GM12878 (cell line): ENCODE measurements at regions of chr4 and their contacts with region 1.

Region 1: DNA sequence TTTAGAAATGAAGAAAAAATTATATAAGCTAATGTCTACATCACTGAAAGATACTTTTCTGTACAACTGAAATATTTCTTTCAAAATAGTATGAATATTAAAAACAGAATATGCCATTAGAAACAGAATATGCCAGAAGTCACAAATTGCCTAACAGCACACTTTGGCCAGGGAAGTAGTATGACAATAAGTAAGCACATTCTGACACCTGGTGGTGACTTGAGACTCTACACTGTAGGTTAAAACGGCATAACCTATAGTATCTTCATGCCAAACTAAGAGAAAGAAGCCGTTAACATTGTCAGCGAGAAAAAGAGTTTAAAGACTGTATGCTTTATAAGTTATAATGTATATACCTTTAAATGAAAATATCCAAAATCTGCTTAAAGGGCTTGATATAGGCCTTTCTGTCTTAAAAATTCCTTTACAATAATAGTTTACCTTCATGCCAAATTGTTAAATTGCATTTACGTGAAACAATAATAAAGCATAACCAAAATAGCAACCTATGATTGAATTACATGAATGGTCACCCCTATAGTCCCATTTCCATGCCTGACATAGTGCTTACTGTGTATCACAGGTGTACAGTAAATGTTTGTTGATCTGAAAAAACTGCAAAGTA is 32.8 kb downstream of the FAM13A start:
- DNase-seq: peak; percentile 47
- ATAC-seq: peak; percentile 99
- H3K4me3 ChIP-seq: no peak overlapping the region
- H3K27ac ChIP-seq: no peak overlapping the region
- H3K4me1 ChIP-seq: no peaks in the 10 kb centered on the region
- H3K27me3 ChIP-seq: no peaks in the 10 kb centered on the region
- CTCF ChIP-seq: peak; percentile 61 to 83 (median 62); a peak in 5 of 6 replicates
- EP300 ChIP-seq: no peak
- POLR2A ChIP-seq: no peak
- RAD21 ChIP-seq: peak; percentile 93

Region 2: GRCh38 chr4:88533937-88534750 is 490.0 kb before region 1 on chr4:
- CTCF ChIA-PET with region 1: interaction called, 68 read pairs
- POLR2A ChIA-PET with region 1: no interaction called
- RAD21 ChIA-PET with region 1: interaction called, 29 read pairs
- SMC1A ChIA-PET with region 1: interaction called, 23 read pairs
- in situ Hi-C with region 1: loop called (anchors 5 kb)
- intact Hi-C with region 1: loop called (anchors 2 kb)
- DNase-seq: no peak
- ATAC-seq: no peak
- H3K4me3 ChIP-seq: no peak overlapping the region
- H3K27ac ChIP-seq: no peak overlapping the region
- H3K4me1 ChIP-seq: no peaks in the 10 kb centered on the region
- H3K27me3 ChIP-seq: no peaks in the 10 kb centered on the region
- CTCF ChIP-seq: no peak
- EP300 ChIP-seq: no peak
- POLR2A ChIP-seq: no peak
- RAD21 ChIP-seq: no peak

Region 3: DNA sequence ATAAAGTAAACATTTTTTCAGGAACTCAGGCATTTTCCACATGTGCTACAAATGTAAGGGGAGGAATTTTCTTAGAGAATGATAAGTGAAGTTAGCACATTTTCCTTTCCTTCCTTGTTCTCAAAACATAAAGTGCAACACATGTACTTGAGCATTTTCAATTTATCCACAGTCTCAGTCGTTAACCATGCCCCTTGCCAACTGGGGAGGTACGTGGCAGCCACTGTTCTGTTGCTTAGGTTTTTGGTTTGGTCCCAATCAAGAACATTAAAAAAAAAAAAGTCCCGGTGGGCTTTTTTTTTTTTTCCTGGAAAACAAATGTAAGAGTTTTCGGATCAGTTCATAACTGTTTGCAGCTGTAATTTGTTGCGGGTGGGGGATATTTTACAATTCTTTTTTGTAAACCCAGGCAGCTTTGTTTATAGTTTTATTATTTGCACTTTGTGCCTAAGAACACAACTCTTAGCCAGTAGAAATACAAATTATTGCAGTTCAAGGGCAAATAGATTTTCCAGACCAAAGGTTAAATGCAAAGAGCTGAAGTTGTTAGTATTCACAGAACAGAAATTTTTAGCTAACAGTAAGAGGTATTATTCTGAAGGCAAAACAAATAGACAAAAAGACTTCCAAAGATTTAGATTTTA is 214.5 kb before region 1 on chr4:
- CTCF ChIA-PET with region 1: interaction called, 433 read pairs
- POLR2A ChIA-PET with region 1: interaction called, 4 read pairs
- RAD21 ChIA-PET with region 1: interaction called, 263 read pairs
- SMC1A ChIA-PET with region 1: interaction called, 401 read pairs
- in situ Hi-C with region 1: no loop called
- intact Hi-C with region 1: no loop called
- DNase-seq: no peak
- ATAC-seq: no peak
- H3K4me3 ChIP-seq: no peak overlapping the region
- H3K27ac ChIP-seq: no peak overlapping the region
- H3K4me1 ChIP-seq: no peaks in the 10 kb centered on the region
- H3K27me3 ChIP-seq: no peaks in the 10 kb centered on the region; a peak in 1 of 4 replicates
- CTCF ChIP-seq: no peak
- EP300 ChIP-seq: no peak
- POLR2A ChIP-seq: no peak
- RAD21 ChIP-seq: no peak

Region 4: GRCh38 chr4:89000844-89001360 is 23.3 kb before region 1 on chr4:
- CTCF ChIA-PET with region 1: interaction called, 18 read pairs
- POLR2A ChIA-PET with region 1: no interaction called
- RAD21 ChIA-PET with region 1: interaction called, 4 read pairs
- SMC1A ChIA-PET with region 1: interaction called, 28 read pairs
- in situ Hi-C with region 1: no loop called
- intact Hi-C with region 1: no loop called
- DNase-seq: no peak
- ATAC-seq: no peak
- H3K4me3 ChIP-seq: no peak overlapping the region
- H3K27ac ChIP-seq: no peak overlapping the region
- H3K4me1 ChIP-seq: no peaks in the 10 kb centered on the region
- H3K27me3 ChIP-seq: no peaks in the 10 kb centered on the region
- CTCF ChIP-seq: no peak
- EP300 ChIP-seq: no peak
- POLR2A ChIP-seq: no peak
- RAD21 ChIP-seq: no peak

Region 5: GRCh38 chr4:89056953-89057398 is 32.8 kb after region 1 on chr4 and contains the start of gene FAM13A:
- CTCF ChIA-PET with region 1: interaction called, 21 read pairs
- POLR2A ChIA-PET with region 1: no interaction called
- RAD21 ChIA-PET with region 1: interaction called, 15 read pairs
- SMC1A ChIA-PET with region 1: interaction called, 36 read pairs
- in situ Hi-C with region 1: no loop called
- intact Hi-C with region 1: no loop called
- DNase-seq: peak; percentile 44
- ATAC-seq: peak; percentile 73
- H3K4me3 ChIP-seq: peak within 1 kb of the TSS; percentile 26; the same call in 1 of the 2 replicates
- H3K27ac ChIP-seq: peak within 1 kb of the TSS; percentile 13; the same call in 1 of the 2 replicates
- H3K4me1 ChIP-seq: no peaks in the 10 kb centered on the region
- H3K27me3 ChIP-seq: no peaks in the 10 kb centered on the region
- CTCF ChIP-seq: no peak
- EP300 ChIP-seq: no peak
- POLR2A ChIP-seq: no peak
- RAD21 ChIP-seq: no peak
- polyA plus RNA-seq, gene FAM13A: 0.09 to 0.27 TPM

Region 6: GRCh38 chr4:89110986-89111832 is 87.0 kb after region 1 on chr4 and contains the start of gene TIGD2:
- CTCF ChIA-PET with region 1: interaction called, 11 read pairs
- POLR2A ChIA-PET with region 1: no interaction called
- RAD21 ChIA-PET with region 1: interaction called, 9 read pairs
- SMC1A ChIA-PET with region 1: interaction called, 6 read pairs
- in situ Hi-C with region 1: no loop called
- intact Hi-C with region 1: loop called (anchors 1 kb)
- DNase-seq: peak; percentile 47
- ATAC-seq: peak; percentile 94
- H3K4me3 ChIP-seq: peak within 1 kb of the TSS; percentile 95
- H3K27ac ChIP-seq: peak within 1 kb of the TSS; percentile 47
- H3K4me1 ChIP-seq: 0 out of 2 replicates have a peak, but pooled peaks cover 3% of the 10 kb centered on the region
- H3K27me3 ChIP-seq: no peaks in the 10 kb centered on the region
- CTCF ChIP-seq: peak; percentile 66 to 83 (median 75)
- EP300 ChIP-seq: no peak
- POLR2A ChIP-seq: peak; percentile 98
- RAD21 ChIP-seq: peak; percentile 60
- polyA plus RNA-seq, gene TIGD2: 2.4 to 3.6 TPM